CD4-positive, alpha-beta T cell (primary cell): ENCODE measurements at regions of chr2 and their contacts with region 1.

Region 1: DNA sequence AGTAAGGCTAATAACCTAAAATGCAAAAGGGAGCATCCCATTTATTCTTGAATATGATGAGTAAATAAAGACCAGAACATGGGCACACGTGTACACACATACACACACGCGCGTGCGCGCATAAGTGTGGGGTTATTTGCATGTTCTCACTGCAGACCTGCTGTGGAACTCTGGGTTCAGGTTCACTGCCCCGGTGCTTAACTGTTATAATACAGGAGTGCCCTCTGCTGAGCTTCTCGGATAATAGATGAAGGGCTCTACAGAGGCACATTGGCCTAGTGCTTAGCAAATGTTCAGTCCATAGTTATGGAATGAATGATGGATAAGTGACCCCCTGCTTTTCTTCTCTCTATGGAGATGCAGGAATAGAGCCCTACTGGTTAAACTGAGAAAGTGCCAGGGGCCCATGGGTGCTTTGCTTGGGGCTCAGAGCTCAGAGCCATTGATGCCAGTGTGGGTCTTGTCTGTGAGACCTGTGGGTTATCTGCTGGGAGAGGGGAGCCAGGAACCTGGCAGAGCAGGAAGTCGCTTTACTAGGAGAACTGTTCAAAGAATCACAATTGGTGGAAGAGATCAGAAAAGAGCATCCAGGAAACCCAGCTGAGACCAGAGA is 3.6 kb upstream of the ARL4C start:
- DNase-seq: peak; percentile 59 to 91 (median 72)
- ATAC-seq: peak; percentile 46
- H3K4me3 ChIP-seq: no peak overlapping the region
- H3K4me3 Mint-ChIP-seq: peak overlapping the region; percentile 79
- H3K27ac ChIP-seq: no peak overlapping the region
- H3K27ac Mint-ChIP-seq: peak overlapping the region; percentile 96
- H3K4me1 ChIP-seq: peaks cover 29% of the 10 kb centered on the region
- H3K4me1 Mint-ChIP-seq: peaks cover 32% of the 10 kb centered on the region
- H3K27me3 ChIP-seq: no peaks in the 10 kb centered on the region
- H3K27me3 Mint-ChIP-seq: no peaks in the 10 kb centered on the region
- CTCF ChIP-seq: peak; percentile 80

Region 2: DNA sequence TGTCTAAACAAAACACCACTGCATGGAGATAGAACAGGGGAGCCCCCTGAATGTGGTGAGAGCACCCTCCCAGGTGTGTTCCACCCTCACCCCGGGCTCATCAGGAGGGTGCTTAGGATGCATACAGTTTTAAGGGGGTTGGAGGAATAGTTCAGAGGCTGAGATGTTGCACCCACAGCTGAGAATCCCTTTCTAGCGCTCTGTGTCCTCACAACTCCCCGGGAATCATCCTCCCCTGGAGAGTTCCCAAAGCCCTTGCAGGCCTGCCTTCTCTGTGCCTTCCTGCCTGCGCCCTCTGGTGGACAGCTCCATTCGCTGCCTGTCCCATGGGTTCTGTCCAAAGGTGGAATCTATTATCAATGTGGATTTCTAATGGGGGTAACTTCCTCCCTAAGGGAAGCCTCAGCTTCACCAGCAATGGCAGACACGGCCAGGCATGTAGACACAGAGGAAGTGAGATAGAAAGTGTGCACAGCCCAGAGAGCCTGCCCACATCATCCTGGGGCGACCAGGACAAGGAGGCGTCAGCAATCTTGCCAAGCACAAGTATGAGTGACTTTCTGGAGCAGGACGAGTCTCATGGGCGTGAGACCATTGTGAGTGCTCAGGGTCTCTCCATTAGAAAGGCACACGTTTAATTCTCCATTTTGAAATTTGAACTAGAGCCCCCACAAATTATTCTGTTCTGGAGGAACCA is 789.0 kb before region 1 on chr2:
- CTCF ChIA-PET with region 1: no interaction called
- POLR2A ChIA-PET with region 1: no interaction called
- intact Hi-C with region 1: loop called in 1 of 2 experiments (anchors 10 kb)
- DNase-seq: peak; percentile 44 to 73 (median 58)
- ATAC-seq: peak; percentile 62
- H3K4me3 ChIP-seq: no peak overlapping the region
- H3K4me3 Mint-ChIP-seq: no peak overlapping the region
- H3K27ac ChIP-seq: no peak overlapping the region
- H3K27ac Mint-ChIP-seq: no peak overlapping the region
- H3K4me1 ChIP-seq: no peaks in the 10 kb centered on the region
- H3K4me1 Mint-ChIP-seq: no peaks in the 10 kb centered on the region
- H3K27me3 ChIP-seq: peaks cover 4 to 6% of the 10 kb centered on the region in 2 experiments
- H3K27me3 Mint-ChIP-seq: peaks cover 29% of the 10 kb centered on the region
- CTCF ChIP-seq: peak; percentile 78

Region 3: DNA sequence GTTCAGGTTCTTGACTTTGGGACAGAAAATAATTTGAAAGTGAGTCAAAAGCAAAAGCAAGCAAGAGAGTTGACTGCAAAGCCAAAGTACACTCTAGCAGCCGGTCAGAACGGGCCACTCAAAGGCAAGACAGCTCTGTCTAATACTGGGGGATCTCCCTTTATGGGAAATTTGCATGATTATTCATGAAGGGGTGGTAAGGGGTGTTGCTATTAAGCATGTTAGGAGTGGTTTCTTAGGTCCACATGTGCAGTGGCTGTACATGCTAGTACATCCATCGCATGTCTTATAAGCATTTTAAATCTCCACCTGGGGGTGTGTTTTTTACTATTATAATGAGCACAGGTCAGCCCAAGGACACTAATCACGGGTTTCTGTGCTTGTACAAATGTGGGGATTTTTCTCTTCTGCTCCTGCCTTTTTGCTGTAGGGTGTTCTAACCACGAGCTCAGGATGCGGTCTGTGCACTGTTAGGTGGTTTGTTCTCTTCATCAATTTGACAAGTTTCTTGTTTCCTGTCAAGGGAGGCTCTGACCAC is 510.2 kb before region 1 on chr2:
- CTCF ChIA-PET with region 1: no interaction called
- POLR2A ChIA-PET with region 1: interaction called, 17 read pairs
- intact Hi-C with region 1: no loop called
- DNase-seq: peak in 13 of 14 experiments; percentile 9 to 94 (median 48)
- ATAC-seq: peak; percentile 89
- H3K4me3 ChIP-seq: peak overlapping the region; percentile 6
- H3K4me3 Mint-ChIP-seq: peak overlapping the region; percentile 12
- H3K27ac ChIP-seq: peak overlapping the region in 1 of 2 donors; percentile 20
- H3K27ac Mint-ChIP-seq: peak overlapping the region; percentile 74
- H3K4me1 ChIP-seq: peaks cover 55% of the 10 kb centered on the region
- H3K4me1 Mint-ChIP-seq: peaks cover 59% of the 10 kb centered on the region
- H3K27me3 ChIP-seq: no peaks in the 10 kb centered on the region
- H3K27me3 Mint-ChIP-seq: no peaks in the 10 kb centered on the region
- CTCF ChIP-seq: no peak

Region 4: DNA sequence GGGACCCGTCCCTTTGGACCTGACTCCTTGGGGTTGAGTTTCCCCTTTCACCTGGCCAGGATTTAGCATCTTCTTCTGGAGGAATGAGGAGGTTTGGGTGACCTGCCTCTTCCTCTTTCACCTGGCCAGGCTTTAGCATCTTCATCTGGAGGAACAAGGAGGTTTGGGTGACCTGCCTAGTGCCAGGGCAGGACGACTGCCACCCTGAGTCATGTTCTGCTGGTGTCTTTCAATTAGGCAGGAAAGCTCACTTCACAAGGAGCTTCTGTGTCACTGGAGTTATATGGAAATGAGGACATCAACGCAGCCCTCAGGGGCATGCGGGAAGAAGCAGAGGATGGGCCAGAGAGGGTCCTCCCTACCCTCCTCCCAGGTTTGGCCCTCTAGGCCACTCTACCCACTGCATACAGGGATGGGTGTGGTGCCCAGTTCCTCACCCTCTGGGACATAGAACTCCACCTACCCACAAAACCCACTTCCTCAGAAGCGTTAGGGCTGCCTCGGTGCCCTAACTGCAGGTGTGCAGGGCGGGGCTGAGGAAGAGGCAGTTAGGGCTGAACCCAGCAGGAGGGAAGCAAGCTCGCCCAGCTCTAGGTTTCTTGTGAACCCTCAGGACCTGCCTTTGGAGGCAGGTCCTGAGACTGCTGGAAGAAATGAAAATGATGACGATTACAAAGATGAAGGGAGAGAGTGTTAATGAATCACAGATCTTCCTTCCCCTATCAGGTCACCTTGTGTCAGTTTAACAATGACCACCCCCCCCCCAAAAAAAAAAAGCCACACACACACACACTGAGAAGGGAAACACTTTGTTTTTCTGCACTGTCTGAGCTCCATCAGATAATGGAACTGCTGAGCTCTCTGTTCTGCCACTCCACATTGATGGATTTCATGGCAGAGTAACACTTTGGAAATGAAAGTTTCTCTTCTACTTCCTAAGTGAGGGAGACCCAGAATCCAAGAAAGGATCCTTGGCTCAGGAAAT is 74.6 kb before region 1 on chr2:
- CTCF ChIA-PET with region 1: interaction called, 8 read pairs
- POLR2A ChIA-PET with region 1: interaction called, 50 read pairs
- intact Hi-C with region 1: loop called in 1 of 2 experiments (anchors 2 kb)
- DNase-seq: peak; percentile 70 to 95 (median 82)
- ATAC-seq: peak; percentile 70
- H3K4me3 ChIP-seq: peak overlapping the region; percentile 5
- H3K4me3 Mint-ChIP-seq: peak overlapping the region; percentile 88
- H3K27ac ChIP-seq: peak overlapping the region; percentile 78 to 87
- H3K27ac Mint-ChIP-seq: peak overlapping the region; percentile 97
- H3K4me1 ChIP-seq: peaks cover 90% of the 10 kb centered on the region
- H3K4me1 Mint-ChIP-seq: peaks cover 97% of the 10 kb centered on the region
- H3K27me3 ChIP-seq: no peaks in the 10 kb centered on the region
- H3K27me3 Mint-ChIP-seq: no peaks in the 10 kb centered on the region
- CTCF ChIP-seq: no peak

Region 5: GRCh38 chr2:234463626-234464290 is 36.7 kb before region 1 on chr2:
- CTCF ChIA-PET with region 1: interaction called, 5 read pairs
- POLR2A ChIA-PET with region 1: interaction called, 45 read pairs
- intact Hi-C with region 1: no loop called
- DNase-seq: peak; percentile 64 to 93 (median 77)
- ATAC-seq: peak; percentile 89
- H3K4me3 ChIP-seq: peak overlapping the region; percentile 25
- H3K4me3 Mint-ChIP-seq: peak overlapping the region; percentile 84
- H3K27ac ChIP-seq: peak overlapping the region; percentile 81 to 93
- H3K27ac Mint-ChIP-seq: peak overlapping the region; percentile 89
- H3K4me1 ChIP-seq: peaks cover 72% of the 10 kb centered on the region
- H3K4me1 Mint-ChIP-seq: peaks cover 82% of the 10 kb centered on the region
- H3K27me3 ChIP-seq: no peaks in the 10 kb centered on the region
- H3K27me3 Mint-ChIP-seq: no peaks in the 10 kb centered on the region
- CTCF ChIP-seq: no peak

Region 6: DNA sequence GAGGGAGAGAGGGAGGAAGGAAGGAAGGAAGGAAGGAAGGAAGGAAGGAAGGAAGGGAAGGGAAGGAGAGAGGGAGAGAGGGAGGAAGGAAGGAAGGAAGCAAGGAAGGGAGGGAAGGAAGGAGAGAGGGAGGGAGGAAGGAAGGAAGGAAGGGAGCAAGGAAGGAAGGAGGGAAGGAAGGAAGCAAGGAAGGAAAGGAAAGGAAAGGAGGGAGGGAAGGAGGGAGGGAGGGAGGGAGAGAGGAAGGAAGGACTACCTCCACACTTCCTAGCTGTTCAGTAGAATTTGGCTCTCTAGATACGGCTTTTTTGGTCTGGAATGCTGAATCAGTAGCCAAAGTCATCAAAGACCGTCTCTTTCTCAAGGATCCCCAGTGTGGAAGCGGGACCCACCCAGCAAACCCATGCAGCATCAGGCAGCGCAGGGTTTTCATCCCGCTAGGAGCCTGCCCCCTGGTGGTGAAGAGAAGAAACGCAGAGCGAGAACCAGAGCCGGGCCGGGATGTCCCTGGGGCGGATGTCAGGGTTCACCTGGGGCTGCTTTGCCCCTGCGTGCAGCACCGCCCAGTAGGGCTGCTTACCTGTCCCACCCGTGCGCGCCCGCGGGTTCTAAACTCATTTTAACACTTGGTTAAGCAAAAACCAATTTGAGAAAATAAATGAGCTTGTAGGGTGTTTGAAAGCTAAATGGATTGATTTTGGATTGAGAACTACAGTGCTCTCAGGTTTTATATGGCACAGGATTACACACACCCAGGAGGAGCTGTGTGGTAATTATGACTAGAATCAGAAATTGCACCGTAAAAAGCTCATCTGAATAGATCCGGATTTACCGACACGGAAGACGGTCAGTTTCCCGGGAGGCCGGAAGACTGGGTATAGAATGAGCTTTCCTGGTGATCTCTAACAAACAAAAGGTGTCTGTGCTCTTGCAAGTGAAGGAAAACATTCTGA is 44.4 kb after region 1 on chr2:
- CTCF ChIA-PET with region 1: interaction called, 3 read pairs
- POLR2A ChIA-PET with region 1: no interaction called
- intact Hi-C with region 1: loop called in 1 of 2 experiments (anchors 2 kb)
- DNase-seq: peak; percentile 59 to 86 (median 70)
- ATAC-seq: peak; percentile 93
- H3K4me3 ChIP-seq: no peak overlapping the region
- H3K4me3 Mint-ChIP-seq: no peak overlapping the region
- H3K27ac ChIP-seq: no peak overlapping the region
- H3K27ac Mint-ChIP-seq: no peak overlapping the region
- H3K4me1 ChIP-seq: peaks cover 6% of the 10 kb centered on the region
- H3K4me1 Mint-ChIP-seq: no peaks in the 10 kb centered on the region
- H3K27me3 ChIP-seq: peaks cover 0 to 5% of the 10 kb centered on the region in 2 experiments
- H3K27me3 Mint-ChIP-seq: peaks cover 38% of the 10 kb centered on the region
- CTCF ChIP-seq: peak; percentile 93

Region 7: DNA sequence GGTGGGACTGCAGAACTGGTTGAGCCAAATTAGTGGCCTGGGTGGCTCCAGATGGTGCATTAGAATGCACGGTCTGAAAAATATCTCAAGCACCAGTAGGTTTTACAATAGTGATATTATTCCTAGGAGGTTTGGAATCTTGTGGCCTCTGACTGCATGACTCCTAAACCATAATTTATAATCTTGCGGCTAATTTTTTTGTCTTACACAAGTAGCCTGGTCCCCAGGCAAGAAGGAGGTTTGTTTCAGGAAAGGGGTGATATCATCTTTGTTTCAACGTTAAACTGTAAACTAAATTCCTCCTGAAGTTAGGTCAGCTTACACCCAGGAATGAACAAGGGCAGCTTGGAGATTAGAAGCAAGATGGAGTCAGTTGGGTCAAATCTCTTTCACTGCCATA is 95.3 kb after region 1 on chr2:
- CTCF ChIA-PET with region 1: no interaction called
- POLR2A ChIA-PET with region 1: no interaction called
- intact Hi-C with region 1: no loop called
- DNase-seq: no peak
- ATAC-seq: no peak
- H3K4me3 ChIP-seq: no peak overlapping the region
- H3K4me3 Mint-ChIP-seq: no peak overlapping the region
- H3K27ac ChIP-seq: no peak overlapping the region
- H3K27ac Mint-ChIP-seq: no peak overlapping the region
- H3K4me1 ChIP-seq: no peaks in the 10 kb centered on the region
- H3K4me1 Mint-ChIP-seq: no peaks in the 10 kb centered on the region
- H3K27me3 ChIP-seq: peaks cover 3% of the 10 kb centered on the region in 2 experiments
- H3K27me3 Mint-ChIP-seq: peaks cover 21% of the 10 kb centered on the region
- CTCF ChIP-seq: no peak